RWPE1 (cell line): ENCODE measurements at regions of chr5 and their contacts with region 1.

Region 1: DNA sequence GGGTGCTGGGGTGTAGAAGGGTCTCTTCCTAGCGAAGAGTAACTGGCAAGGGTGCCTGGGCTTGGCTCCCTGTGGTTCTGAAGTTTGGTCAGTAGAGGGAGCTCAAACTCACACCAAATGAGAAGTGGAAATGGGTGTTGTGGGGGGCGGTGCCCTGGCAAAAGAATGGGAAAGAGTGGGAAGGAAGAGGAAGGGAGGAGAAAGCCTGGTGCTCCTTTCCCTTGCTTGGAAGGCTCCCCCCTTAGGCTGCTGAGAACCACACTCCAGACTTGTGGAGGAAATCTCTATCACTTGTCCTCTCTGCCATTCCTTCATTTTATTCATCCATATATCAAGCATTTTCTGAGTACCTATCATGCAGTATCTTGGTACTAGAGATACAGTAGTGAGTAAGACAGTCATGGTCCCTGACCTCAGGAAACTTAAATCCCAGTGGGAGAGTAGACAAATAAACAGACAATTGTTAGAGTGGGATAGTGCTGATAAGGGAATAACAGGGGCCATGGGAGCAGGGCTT is 13.0 kb downstream of the SLC4A9 start:
- DNase-seq: peak; percentile 84
- H3K27ac ChIP-seq: no peak overlapping the region
- CTCF ChIP-seq: peak; percentile 96

Region 2: DNA sequence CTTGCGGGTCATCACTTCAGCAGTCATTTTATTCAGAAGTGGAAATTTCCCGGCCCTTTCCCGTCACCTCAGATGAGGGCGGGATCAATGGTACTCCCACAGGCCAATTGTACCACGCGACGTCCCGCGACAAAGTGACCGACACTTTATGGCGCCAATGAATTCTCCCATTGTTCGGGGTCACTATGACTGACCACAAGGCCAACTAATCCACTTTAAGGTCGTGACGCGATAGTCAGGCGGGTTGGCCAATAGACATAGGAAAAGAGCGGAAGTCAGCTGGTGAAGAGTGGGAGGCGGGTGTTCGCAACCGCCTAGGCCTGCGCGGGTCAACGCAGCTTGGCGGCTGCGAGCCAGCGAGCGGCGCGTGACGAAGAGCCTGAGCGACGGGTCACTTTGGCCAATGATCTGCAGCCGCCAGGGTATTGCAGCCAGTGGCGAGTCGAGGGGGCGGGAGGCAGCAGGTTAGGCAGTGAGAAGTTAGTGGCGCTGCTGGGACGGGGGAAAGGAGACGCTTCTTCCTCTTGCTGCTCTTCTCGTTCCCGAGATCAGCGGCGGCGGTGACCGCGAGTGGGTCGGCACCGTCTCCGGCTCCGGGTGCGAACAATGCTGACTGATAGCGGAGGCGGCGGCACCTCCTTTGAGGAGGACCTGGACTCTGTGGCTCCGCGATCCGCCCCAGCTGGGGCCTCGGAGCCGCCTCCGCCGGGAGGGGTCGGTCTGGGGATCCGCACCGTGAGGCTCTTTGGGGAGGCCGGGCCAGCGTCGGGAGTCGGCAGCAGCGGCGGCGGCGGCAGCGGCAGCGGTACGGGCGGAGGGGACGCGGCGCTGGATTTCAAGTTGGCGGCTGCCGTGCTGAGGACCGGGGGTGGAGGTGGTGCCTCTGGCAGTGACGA is 28.6 kb after region 1 on chr5 and contains the start of gene ANKHD1:
- CTCF ChIA-PET with region 1: interaction called, 19 read pairs
- POLR2A ChIA-PET with region 1: no interaction called
- DNase-seq: peak; percentile 100
- H3K27ac ChIP-seq: peak within 1 kb of the TSS; percentile 91
- CTCF ChIP-seq: no peak